ENCODE measurements at regions of chr1 and their contacts with region 1.

Region 1: GRCh38 chr1:111507411-111508201 is 4.2 kb upstream of the ADORA3 start:
- DNase-seq: peak; percentile 89
- ATAC-seq: peak; percentile 70
- H3K4me3 Mint-ChIP-seq: peak overlapping the region; percentile 67
- H3K27ac Mint-ChIP-seq: peak overlapping the region; percentile 94
- H3K4me1 Mint-ChIP-seq: peaks cover 58% of the 10 kb centered on the region
- H3K27me3 Mint-ChIP-seq: no peaks in the 10 kb centered on the region

Region 2: GRCh38 chr1:111497592-111497991 is 10.0 kb before region 1 on chr1:
- CTCF ChIA-PET with region 1: interaction called, 27 read pairs
- DNase-seq: no peak
- ATAC-seq: no peak
- H3K4me3 Mint-ChIP-seq: no peak overlapping the region
- H3K27ac Mint-ChIP-seq: no peak overlapping the region
- H3K4me1 Mint-ChIP-seq: peaks cover 30% of the 10 kb centered on the region
- H3K27me3 Mint-ChIP-seq: no peaks in the 10 kb centered on the region

Region 3: DNA sequence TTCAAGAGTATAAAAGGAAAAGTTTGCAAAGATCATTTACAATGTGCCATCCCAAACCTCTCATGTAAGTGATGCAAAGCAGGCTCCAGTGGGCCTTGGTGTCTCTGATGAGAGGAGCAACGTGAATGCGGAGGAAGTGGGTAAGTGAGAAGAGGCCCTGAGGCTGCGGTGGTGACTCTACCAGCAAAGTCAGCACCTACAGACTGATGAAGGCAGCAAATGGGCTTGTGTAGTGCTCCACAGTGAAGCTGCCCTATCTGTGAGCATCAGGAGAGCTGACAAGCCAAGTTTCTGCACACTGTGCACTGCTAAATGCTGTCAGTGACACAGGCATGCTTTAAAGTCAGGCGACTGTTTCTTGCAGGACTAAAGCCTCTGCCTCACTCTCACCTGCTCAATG is 96.4 kb after region 1 on chr1:
- CTCF ChIA-PET with region 1: interaction called, 71 read pairs
- DNase-seq: peak; percentile 95
- ATAC-seq: peak; percentile 90
- H3K4me3 Mint-ChIP-seq: peak overlapping the region; percentile 56
- H3K27ac Mint-ChIP-seq: peak overlapping the region; percentile 96
- H3K4me1 Mint-ChIP-seq: peaks cover 77% of the 10 kb centered on the region
- H3K27me3 Mint-ChIP-seq: no peaks in the 10 kb centered on the region

Region 4: GRCh38 chr1:111639602-111640198 is 132.1 kb after region 1 on chr1:
- CTCF ChIA-PET with region 1: interaction called, 14 read pairs
- DNase-seq: no peak
- ATAC-seq: no peak
- H3K4me3 Mint-ChIP-seq: no peak overlapping the region
- H3K27ac Mint-ChIP-seq: no peak overlapping the region
- H3K4me1 Mint-ChIP-seq: peaks cover 63% of the 10 kb centered on the region
- H3K27me3 Mint-ChIP-seq: no peaks in the 10 kb centered on the region

Region 5: GRCh38 chr1:111664652-111665051 is 157.0 kb after region 1 on chr1:
- CTCF ChIA-PET with region 1: interaction called, 15 read pairs
- DNase-seq: no peak
- ATAC-seq: peak; percentile 34
- H3K4me3 Mint-ChIP-seq: no peak overlapping the region
- H3K27ac Mint-ChIP-seq: peak overlapping the region; percentile 50
- H3K4me1 Mint-ChIP-seq: peaks cover 48% of the 10 kb centered on the region
- H3K27me3 Mint-ChIP-seq: no peaks in the 10 kb centered on the region

Region 6: DNA sequence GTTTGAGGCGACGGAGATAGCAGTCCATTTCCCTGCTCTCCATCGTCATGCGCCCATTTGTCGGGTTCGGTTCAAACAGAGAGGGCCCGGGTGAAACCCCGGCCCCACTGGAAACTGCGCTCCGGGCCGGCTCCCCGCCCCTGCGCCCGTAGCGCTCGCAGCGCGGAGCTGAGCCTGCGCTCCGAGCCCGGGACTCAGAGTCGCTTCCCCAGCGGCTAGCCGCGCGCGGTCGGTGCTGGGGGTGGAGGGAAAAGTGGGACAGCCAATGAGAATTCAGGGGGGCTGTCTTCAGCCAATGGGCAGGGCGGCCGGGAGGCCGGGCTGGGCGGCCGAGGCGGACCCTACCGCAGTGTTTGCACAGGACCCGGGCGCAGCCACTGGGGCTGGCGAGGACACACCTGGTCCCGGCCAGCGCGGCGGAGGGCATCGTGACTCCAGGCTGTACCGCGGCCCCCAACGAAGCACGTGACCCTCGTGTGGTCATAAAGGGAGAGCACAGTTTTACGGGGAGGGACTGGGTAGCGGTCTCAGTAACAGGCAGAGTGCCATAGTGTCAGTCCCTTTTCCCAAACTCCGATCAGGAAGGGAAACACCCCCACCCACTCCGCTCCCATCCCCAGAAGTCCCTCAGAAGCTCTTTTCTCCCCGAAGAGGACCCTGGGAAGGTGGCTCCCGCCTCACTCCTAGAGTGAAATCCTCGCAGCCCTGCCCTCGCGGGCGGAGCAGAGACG is 231.8 kb after region 1 on chr1 and contains the start of gene INKA2:
- CTCF ChIA-PET with region 1: interaction called, 20 read pairs
- DNase-seq: peak; percentile 92
- ATAC-seq: peak; percentile 86
- H3K4me3 Mint-ChIP-seq: peak within 1 kb of the TSS; percentile 82
- H3K27ac Mint-ChIP-seq: peak within 1 kb of the TSS; percentile 70
- H3K4me1 Mint-ChIP-seq: peaks cover 19% of the 10 kb centered on the region
- H3K27me3 Mint-ChIP-seq: peaks cover 45% of the 10 kb centered on the region
- total RNA-seq, gene INKA2: 1.7 to 1.9 TPM

Region 7: GRCh38 chr1:111769517-111770146 is 262.0 kb after region 1 on chr1:
- CTCF ChIA-PET with region 1: interaction called, 16 read pairs
- DNase-seq: peak; percentile 64
- ATAC-seq: peak; percentile 58
- H3K4me3 Mint-ChIP-seq: no peak overlapping the region
- H3K27ac Mint-ChIP-seq: no peak overlapping the region
- H3K4me1 Mint-ChIP-seq: peaks cover 5% of the 10 kb centered on the region
- H3K27me3 Mint-ChIP-seq: no peaks in the 10 kb centered on the region